Aorta (tissue), 5 donors: ENCODE measurements at regions of chr1 and their contacts with region 1.

Region 1: DNA sequence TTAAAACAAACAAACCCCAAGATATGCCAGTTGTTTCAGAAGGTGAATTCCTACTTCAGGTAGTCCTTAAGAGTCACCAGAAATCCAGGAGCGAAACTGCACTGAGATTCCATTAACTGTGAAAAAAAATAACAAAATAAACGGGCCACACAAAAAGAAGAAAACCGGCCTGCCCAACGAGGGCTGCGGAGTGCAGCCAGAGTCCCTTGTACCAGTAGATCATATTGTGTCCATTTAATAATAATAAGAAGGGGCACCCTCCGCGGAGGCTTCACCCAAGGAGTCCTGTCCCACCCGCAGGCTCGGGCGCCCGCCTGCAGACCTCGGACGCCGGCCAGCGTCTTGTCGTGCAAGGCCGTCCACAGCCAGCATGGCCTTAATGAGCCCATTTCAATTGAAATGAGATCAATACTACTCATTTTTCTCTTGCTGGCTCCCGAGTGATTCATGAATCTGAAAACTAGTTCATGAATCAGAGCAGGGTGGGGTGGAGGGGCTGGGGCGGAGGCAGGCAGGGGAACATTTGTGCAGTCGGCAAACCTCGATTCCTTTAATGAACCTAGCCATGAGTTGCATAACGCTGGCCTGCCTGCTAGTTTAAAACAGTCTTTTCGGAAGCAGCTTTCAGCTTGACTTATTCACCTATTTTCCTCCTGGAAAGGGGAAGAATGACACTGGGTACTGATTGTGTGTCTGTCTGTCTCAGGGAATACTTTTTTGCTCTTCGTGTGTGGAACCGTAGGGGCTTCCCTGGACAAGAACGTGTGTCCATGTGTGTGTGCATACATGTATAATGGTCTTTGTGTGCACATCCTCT is 113.1 kb upstream of the IRF2BP2 start:
- DNase-seq: peak; percentile 88
- ATAC-seq: peak; percentile 68
- H3K4me3 ChIP-seq: no peak overlapping the region
- H3K27ac ChIP-seq: peak overlapping the region; percentile 97 to 100
- H3K4me1 ChIP-seq: peaks cover 4 to 9% of the 10 kb centered on the region in 2 donors
- H3K27me3 ChIP-seq: no peaks in the 10 kb centered on the region

Region 2: GRCh38 chr1:234499119-234499942 is 223.8 kb before region 1 on chr1:
- intact Hi-C with region 1: loop called (anchors 1 to 5 kb)
- DNase-seq: peak; percentile 94 to 97
- ATAC-seq: peak; percentile 97
- H3K4me3 ChIP-seq: no peak overlapping the region
- H3K27ac ChIP-seq: peak overlapping the region; percentile 62 to 97
- H3K4me1 ChIP-seq: peaks cover 0 to 15% of the 10 kb centered on the region in 2 donors
- H3K27me3 ChIP-seq: no peaks in the 10 kb centered on the region

Region 3: DNA sequence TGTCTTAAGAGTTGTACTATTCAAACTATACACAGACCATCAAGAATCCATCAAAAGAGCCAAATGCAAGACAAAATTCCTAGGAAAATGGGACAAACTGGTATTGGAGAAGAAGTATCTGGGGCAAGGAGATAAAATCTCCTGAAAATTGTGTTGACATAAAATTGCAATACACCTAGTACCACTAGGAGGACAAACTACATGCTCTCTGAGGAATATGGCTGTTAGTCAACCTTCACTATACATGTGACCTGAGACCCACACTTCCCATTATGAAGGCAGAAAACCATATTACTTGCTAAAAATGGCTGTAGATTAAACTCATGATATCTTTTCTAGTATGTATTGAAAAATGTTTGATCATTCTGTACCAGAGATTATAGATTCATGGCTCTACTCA is 143.1 kb before region 1 on chr1:
- intact Hi-C with region 1: no loop called
- DNase-seq: no peak
- ATAC-seq: no peak
- H3K4me3 ChIP-seq: no peak overlapping the region
- H3K27ac ChIP-seq: no peak overlapping the region
- H3K4me1 ChIP-seq: peaks cover 0 to 4% of the 10 kb centered on the region in 2 donors
- H3K27me3 ChIP-seq: no peaks in the 10 kb centered on the region

Region 4: DNA sequence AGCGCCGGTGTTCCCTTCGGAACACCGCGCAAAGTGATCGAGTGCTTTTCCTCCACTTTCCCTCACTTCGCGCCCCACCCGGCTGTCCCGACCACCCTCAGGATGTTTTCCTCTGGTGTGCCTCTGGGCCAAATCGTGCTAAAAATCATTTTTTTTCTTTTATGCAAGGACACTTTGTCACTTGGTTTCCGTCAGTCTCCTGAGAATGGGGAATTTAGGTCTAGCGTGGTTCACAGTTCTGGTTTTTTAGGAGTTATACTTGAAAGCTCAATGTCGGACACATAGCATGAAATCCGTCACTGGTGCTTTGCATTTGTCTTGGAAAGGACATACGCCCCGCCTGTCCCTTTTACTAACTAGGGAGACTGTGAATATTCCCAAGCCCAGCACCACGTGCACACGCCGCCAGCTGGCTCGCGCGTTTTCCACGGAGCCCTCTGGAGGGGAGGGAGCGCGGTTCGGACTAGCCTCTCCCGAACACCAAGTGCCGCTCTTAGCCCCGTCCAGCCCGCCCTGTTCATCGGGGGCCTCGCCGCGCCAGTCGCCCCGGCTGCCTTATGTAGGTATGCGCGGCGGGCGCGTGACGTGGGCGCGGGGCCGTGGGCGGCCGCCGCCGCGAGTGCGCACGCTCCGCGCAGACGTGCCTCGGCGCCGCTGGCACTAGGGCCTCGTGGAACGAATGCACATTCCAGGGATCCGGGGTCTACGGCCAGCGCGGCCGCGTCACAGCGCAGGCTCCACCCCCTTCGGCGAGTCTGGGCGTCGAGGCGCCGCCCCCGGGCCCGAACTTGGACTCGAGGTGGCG is 112.6 kb before region 1 on chr1:
- intact Hi-C with region 1: loop called (anchors 1 kb)
- DNase-seq: peak; percentile 98
- ATAC-seq: peak; percentile 87
- H3K4me3 ChIP-seq: peak overlapping the region; percentile 89 to 92
- H3K27ac ChIP-seq: peak overlapping the region; percentile 96 to 97
- H3K4me1 ChIP-seq: peaks cover 5% of the 10 kb centered on the region in 2 donors
- H3K27me3 ChIP-seq: no peaks in the 10 kb centered on the region

Region 5: GRCh38 chr1:234772345-234773147 is 49.4 kb after region 1 on chr1:
- intact Hi-C with region 1: loop called in 1 of 2 experiments (anchors 5 kb)
- DNase-seq: peak; percentile 88 to 93
- ATAC-seq: peak; percentile 64
- H3K4me3 ChIP-seq: no peak overlapping the region
- H3K27ac ChIP-seq: peak overlapping the region in 1 of 2 donors; percentile 62
- H3K4me1 ChIP-seq: no peaks in the 10 kb centered on the region
- H3K27me3 ChIP-seq: no peaks in the 10 kb centered on the region

Region 6: GRCh38 chr1:234980645-234981396 is 257.7 kb after region 1 on chr1:
- intact Hi-C with region 1: loop called (anchors 5 kb)
- DNase-seq: peak; percentile 95
- ATAC-seq: peak; percentile 90
- H3K4me3 ChIP-seq: no peak overlapping the region
- H3K27ac ChIP-seq: peak overlapping the region; percentile 97 to 98
- H3K4me1 ChIP-seq: peaks cover 7 to 10% of the 10 kb centered on the region in 2 donors
- H3K27me3 ChIP-seq: no peaks in the 10 kb centered on the region

Region 7: DNA sequence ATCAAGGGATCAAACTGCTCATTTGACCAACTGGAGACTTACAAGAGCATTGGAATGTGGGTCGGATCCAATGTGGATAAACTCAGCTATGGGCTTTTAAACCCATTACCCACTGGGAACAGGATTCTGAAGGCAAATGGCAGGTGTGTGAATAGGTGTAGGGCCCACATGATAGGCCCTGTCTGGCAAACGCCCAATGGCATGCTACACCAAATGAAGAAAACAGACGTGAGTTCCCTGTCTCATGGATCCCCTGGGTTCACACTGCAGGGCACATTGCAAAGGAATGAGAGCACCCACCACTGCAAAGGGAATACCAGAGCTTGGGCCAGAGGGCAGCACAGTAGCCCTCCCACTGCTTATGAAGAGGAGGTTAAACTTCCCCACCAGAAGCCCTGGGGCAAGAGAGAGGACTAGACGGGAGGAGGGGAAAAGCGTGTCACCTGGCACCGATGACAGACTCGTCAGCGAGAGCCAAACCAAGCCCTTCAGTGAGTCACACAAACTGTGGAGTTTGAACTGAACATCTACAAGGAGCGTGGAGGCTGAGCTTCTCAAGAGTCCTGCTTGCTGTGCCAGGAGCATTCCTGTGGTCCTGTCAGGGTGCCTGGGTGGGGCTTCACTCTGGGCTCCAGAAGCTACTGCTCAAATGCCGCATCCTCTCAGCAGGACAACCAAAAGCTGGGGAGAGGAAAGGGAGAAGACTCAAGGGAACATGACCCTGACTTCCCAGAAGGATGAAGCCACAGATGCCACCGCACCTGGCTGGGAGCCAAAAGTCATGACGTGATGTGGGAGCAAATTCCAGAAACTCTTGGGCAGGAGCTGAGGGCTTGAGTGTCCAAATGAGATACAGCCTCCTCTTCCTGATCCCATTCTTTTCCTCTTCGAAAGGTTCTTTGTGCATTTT is 344.4 kb after region 1 on chr1:
- intact Hi-C with region 1: loop called in 1 of 2 experiments (anchors 1 kb)
- DNase-seq: peak; percentile 92 to 95
- ATAC-seq: peak; percentile 82
- H3K4me3 ChIP-seq: no peak overlapping the region
- H3K27ac ChIP-seq: peak overlapping the region; percentile 16 to 89
- H3K4me1 ChIP-seq: peaks cover 0 to 2% of the 10 kb centered on the region in 2 donors
- H3K27me3 ChIP-seq: no peaks in the 10 kb centered on the region